Esophagus squamous epithelium (tissue), 5 donors: ENCODE measurements at regions of chr1 and their contacts with region 1.

Region 1: GRCh38 chr1:47710329-47711071 is 272.7 kb downstream of the FOXD2 start:
- DNase-seq: no peak
- H3K4me3 ChIP-seq: peak overlapping the region in 3 of 4 donors; percentile 34 to 63 (median 41)
- H3K27ac ChIP-seq: no peak overlapping the region
- H3K4me1 ChIP-seq: peaks cover 19 to 34% (median 20%) of the 10 kb centered on the region in 3 donors
- H3K27me3 ChIP-seq: peaks cover 14 to 100% (median 32%) of the 10 kb centered on the region in 4 donors
- CTCF ChIP-seq: peak; percentile 78 to 97 (median 90)
- POLR2A ChIP-seq: no peak

Region 2: GRCh38 chr1:47192458-47193384 is 517.8 kb before region 1 on chr1:
- intact Hi-C with region 1: loop called (anchors 10 kb)
- DNase-seq: no peak
- H3K4me3 ChIP-seq: no peak overlapping the region
- H3K27ac ChIP-seq: peak overlapping the region in 1 of 4 donors; percentile 85
- H3K4me1 ChIP-seq: peaks cover 24 to 55% (median 36%) of the 10 kb centered on the region in 3 donors
- H3K27me3 ChIP-seq: peaks cover 0 to 19% (median 0%) of the 10 kb centered on the region in 4 donors
- CTCF ChIP-seq: peak; percentile 83 to 95 (median 90)
- POLR2A ChIP-seq: no peak

Region 3: GRCh38 chr1:47444562-47445465 is 265.7 kb before region 1 on chr1:
- intact Hi-C with region 1: loop called (anchors 5 kb)
- DNase-seq: no peak
- H3K4me3 ChIP-seq: peak overlapping the region in 2 of 4 donors; percentile 29 to 58
- H3K27ac ChIP-seq: no peak overlapping the region
- H3K4me1 ChIP-seq: peaks cover 6 to 24% (median 12%) of the 10 kb centered on the region in 3 donors
- H3K27me3 ChIP-seq: peaks cover 30 to 100% (median 50%) of the 10 kb centered on the region in 4 donors
- CTCF ChIP-seq: no peak
- POLR2A ChIP-seq: no peak

Region 4: GRCh38 chr1:47532921-47533792 is 177.3 kb before region 1 on chr1:
- intact Hi-C with region 1: loop called (anchors 10 kb)
- DNase-seq: no peak
- H3K4me3 ChIP-seq: peak overlapping the region; percentile 7 to 58 (median 40)
- H3K27ac ChIP-seq: peak overlapping the region in 3 of 4 donors; percentile 12 to 36 (median 13)
- H3K4me1 ChIP-seq: peaks cover 2 to 18% (median 5%) of the 10 kb centered on the region in 3 donors
- H3K27me3 ChIP-seq: peaks cover 0 to 76% (median 0%) of the 10 kb centered on the region in 4 donors
- CTCF ChIP-seq: no peak
- POLR2A ChIP-seq: no peak

Region 5: GRCh38 chr1:47624531-47624930 is 86.0 kb before region 1 on chr1:
- intact Hi-C with region 1: no loop called
- DNase-seq: no peak
- H3K4me3 ChIP-seq: no peak overlapping the region
- H3K27ac ChIP-seq: no peak overlapping the region
- H3K4me1 ChIP-seq: no peaks in the 10 kb centered on the region
- H3K27me3 ChIP-seq: peaks cover 0 to 20% (median 0%) of the 10 kb centered on the region in 4 donors
- CTCF ChIP-seq: peak in 2 of 6 experiments; percentile 31 to 37
- POLR2A ChIP-seq: no peak

Region 6: GRCh38 chr1:47664356-47664755 is 46.1 kb before region 1 on chr1:
- intact Hi-C with region 1: no loop called
- DNase-seq: no peak
- H3K4me3 ChIP-seq: no peak overlapping the region
- H3K27ac ChIP-seq: no peak overlapping the region
- H3K4me1 ChIP-seq: no peaks in the 10 kb centered on the region
- H3K27me3 ChIP-seq: peaks cover 0 to 10% (median 0%) of the 10 kb centered on the region in 4 donors
- CTCF ChIP-seq: no peak
- POLR2A ChIP-seq: no peak